Heart right ventricle (tissue), 16 donors: ENCODE measurements at regions of chr6 and their contacts with region 1.

Region 1: GRCh38 chr6:138572167-138572865 is 73.0 kb upstream of the NHSL1 start:
- DNase-seq: peak; percentile 48 to 79
- ATAC-seq: peak; percentile 84 to 94 (median 90)
- H3K4me3 ChIP-seq: peak overlapping the region; percentile 4 to 64 (median 48)
- H3K27ac ChIP-seq: peak overlapping the region in 9 of 10 donors; percentile 41 to 78 (median 69)
- H3K4me1 ChIP-seq: peaks cover 0 to 30% (median 8%) of the 10 kb centered on the region in 9 donors
- H3K27me3 ChIP-seq: peaks cover 0 to 27% (median 0%) of the 10 kb centered on the region in 7 donors
- CTCF ChIP-seq: no peak

Region 2: GRCh38 chr6:138517635-138518034 is 54.7 kb before region 1 on chr6:
- intact Hi-C with region 1: loop called in 2 of 10 experiments (anchors 5 kb)
- DNase-seq: peak in 1 of 2 donors; percentile 22
- ATAC-seq: peak in 2 of 8 donors; percentile 37 to 47
- H3K4me3 ChIP-seq: no peak overlapping the region
- H3K27ac ChIP-seq: no peak overlapping the region
- H3K4me1 ChIP-seq: peaks cover 0 to 67% (median 13%) of the 10 kb centered on the region in 9 donors
- H3K27me3 ChIP-seq: no peaks in the 10 kb centered on the region
- CTCF ChIP-seq: peak; percentile 12 to 66 (median 53)

Region 3: DNA sequence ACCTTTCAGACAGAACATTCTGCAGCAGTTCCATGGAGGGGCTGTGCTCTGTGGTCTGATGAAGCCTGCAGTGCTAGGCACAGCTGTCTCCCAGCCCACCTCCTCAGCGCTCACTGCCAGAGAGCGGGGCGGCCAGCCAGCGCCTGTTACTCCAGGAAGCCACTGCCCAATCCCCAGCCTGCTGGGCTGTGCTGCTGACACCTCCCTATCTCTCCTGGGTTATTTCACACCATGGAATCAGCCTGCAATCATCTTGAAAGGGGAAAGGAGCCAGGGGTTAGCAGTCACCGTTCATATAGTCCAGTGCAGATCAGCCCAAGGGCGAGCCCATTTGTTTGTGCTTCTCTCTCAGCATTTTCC is 26.7 kb before region 1 on chr6:
- intact Hi-C with region 1: loop called in 1 of 10 experiments (anchors 2 kb)
- DNase-seq: peak; percentile 80 to 85
- ATAC-seq: peak; percentile 88 to 96 (median 94)
- H3K4me3 ChIP-seq: peak overlapping the region; percentile 18 to 61 (median 52)
- H3K27ac ChIP-seq: peak overlapping the region; percentile 32 to 88 (median 83)
- H3K4me1 ChIP-seq: peaks cover 3 to 57% (median 36%) of the 10 kb centered on the region in 9 donors
- H3K27me3 ChIP-seq: no peaks in the 10 kb centered on the region
- CTCF ChIP-seq: no peak

Region 4: DNA sequence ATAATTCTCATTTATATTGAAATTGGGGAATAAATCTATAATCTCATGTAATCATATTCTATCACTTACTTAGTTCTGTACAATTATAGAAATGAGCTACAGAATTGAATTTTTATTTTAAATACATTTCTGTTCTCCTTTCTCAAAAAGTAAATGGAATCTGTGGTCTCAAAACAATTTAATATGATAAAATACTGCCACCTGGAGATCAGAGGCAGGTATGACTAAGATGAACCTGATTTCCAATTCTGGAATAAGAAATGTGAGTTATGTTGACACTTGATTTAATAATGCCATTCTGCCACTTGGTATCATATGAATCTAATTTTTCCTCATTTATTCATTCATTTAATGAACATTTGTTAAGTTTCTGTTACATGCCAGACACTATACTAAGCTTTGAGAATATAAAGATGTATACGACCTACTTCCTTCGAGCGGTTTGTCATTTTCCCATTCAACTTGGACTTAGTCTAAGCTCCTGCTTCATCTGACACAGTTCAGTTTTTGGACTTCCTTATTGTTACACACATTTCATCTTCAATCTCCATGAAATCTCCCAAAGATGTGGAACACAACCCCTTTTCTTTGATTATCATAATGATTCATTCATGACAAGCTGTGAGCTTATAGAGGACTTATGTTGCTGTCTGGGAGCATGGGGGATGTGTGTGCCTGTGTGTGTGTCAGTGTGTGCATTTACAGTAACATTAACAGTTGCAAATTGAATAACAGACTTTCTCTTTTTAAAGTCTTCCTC is 193.8 kb after region 1 on chr6:
- intact Hi-C with region 1: no loop called
- DNase-seq: no peak
- ATAC-seq: no peak
- H3K4me3 ChIP-seq: no peak overlapping the region
- H3K27ac ChIP-seq: no peak overlapping the region
- H3K4me1 ChIP-seq: no peaks in the 10 kb centered on the region
- H3K27me3 ChIP-seq: no peaks in the 10 kb centered on the region
- CTCF ChIP-seq: peak; percentile 34 to 86 (median 70)